Lower lobe of right lung (tissue), 2 donors: ENCODE measurements at regions of chr4 and their contacts with region 1.

Region 1: GRCh38 chr4:74675673-74676279 is 118.5 kb downstream of the BTC start:
- DNase-seq: no peak
- ATAC-seq: peak; percentile 81 to 85
- H3K4me3 ChIP-seq: no peak overlapping the region
- H3K27ac ChIP-seq: no peak overlapping the region
- H3K4me1 ChIP-seq: no peaks in the 10 kb centered on the region
- H3K27me3 ChIP-seq: no peaks in the 10 kb centered on the region
- CTCF ChIP-seq: peak; percentile 75

Region 2: GRCh38 chr4:74370912-74371311 is 304.9 kb before region 1 on chr4:
- intact Hi-C with region 1: loop called (anchors 10 kb)
- DNase-seq: no peak
- ATAC-seq: peak; percentile 74 to 83
- H3K4me3 ChIP-seq: no peak overlapping the region
- H3K27ac ChIP-seq: no peak overlapping the region
- H3K4me1 ChIP-seq: peaks cover under 1% of the 10 kb centered on the region
- H3K27me3 ChIP-seq: peaks cover 4% of the 10 kb centered on the region
- CTCF ChIP-seq: peak; percentile 54

Region 3: GRCh38 chr4:74397748-74398426 is 277.9 kb before region 1 on chr4:
- intact Hi-C with region 1: no loop called
- DNase-seq: no peak
- ATAC-seq: peak in 1 of 2 donors; percentile 55
- H3K4me3 ChIP-seq: peak overlapping the region; percentile 43
- H3K27ac ChIP-seq: peak overlapping the region; percentile 58
- H3K4me1 ChIP-seq: no peaks in the 10 kb centered on the region
- H3K27me3 ChIP-seq: no peaks in the 10 kb centered on the region
- CTCF ChIP-seq: no peak

Region 4: DNA sequence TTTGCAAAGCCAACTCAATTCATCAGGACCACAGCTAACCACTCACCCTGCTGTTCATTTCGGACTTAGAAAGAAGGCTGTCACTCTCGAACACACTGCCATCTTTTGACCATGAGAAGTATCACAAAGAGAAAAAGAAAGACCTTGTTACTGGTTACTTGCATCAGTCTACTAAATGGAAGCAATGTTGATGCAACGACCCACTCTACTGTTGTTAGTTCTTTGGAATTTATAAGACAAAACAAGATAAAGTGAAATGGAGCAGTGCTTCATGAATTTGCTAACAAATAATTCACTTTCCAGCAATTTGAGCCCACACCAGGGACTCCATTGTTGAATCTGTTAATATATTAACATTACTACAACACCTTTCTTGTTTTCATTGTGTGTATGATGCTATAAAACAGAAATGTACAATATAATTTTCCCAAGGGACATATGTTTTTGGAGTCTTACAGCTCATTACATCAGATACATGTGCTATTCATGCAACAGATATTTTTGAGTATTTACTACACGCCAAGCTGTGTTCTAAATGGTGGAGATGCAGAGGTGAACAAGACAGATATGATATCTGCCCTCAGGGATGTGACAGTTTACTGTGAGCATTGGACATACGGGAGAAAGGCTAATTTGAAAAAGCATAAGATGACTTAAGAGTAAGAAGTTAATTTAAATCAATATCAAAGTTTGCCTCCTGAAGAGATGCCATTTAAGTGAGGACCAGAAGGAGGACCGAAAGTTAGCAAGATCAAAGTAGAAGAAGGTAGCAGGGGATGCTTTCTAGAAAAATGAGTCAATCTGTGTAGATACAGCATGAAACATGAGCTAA is 143.6 kb before region 1 on chr4:
- intact Hi-C with region 1: loop called (anchors 10 kb)
- DNase-seq: no peak
- ATAC-seq: peak; percentile 79 to 82
- H3K4me3 ChIP-seq: no peak overlapping the region
- H3K27ac ChIP-seq: no peak overlapping the region
- H3K4me1 ChIP-seq: no peaks in the 10 kb centered on the region
- H3K27me3 ChIP-seq: no peaks in the 10 kb centered on the region
- CTCF ChIP-seq: peak; percentile 56

Region 5: DNA sequence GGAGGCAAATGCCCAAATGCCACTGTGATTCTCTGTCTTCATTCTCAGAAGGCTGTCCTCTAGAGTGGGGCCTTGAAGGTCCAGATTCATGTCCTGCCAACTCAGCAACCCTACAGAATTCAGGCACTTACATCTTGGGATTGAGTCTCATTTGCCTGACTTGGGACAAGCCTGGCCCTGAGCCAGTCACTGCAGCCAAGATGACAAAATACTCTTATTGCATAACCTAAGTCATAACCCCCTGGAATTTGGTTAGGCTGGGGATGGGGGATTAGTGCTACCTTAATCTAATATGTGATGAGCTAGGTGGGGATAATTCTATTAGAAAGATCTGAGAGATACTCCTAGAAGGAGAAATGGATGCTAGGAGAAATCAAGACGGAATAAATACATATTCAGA is 130.3 kb before region 1 on chr4:
- intact Hi-C with region 1: no loop called
- DNase-seq: peak; percentile 42
- ATAC-seq: peak in 1 of 2 donors; percentile 40
- H3K4me3 ChIP-seq: no peak overlapping the region
- H3K27ac ChIP-seq: no peak overlapping the region
- H3K4me1 ChIP-seq: peaks cover 20% of the 10 kb centered on the region
- H3K27me3 ChIP-seq: no peaks in the 10 kb centered on the region
- CTCF ChIP-seq: no peak

Region 6: GRCh38 chr4:74874753-74875367 is 199.1 kb after region 1 on chr4:
- intact Hi-C with region 1: no loop called
- DNase-seq: no peak
- ATAC-seq: peak; percentile 90 to 96
- H3K4me3 ChIP-seq: no peak overlapping the region
- H3K27ac ChIP-seq: no peak overlapping the region
- H3K4me1 ChIP-seq: peaks cover 10% of the 10 kb centered on the region
- H3K27me3 ChIP-seq: no peaks in the 10 kb centered on the region
- CTCF ChIP-seq: peak; percentile 86